Heart left ventricle (tissue), 16 donors: ENCODE measurements at regions of chr19 and their contacts with region 1.

Region 1: GRCh38 chr19:19053508-19054314 is 10.1 kb upstream of the SLC25A42 start:
- DNase-seq: peak; percentile 59 to 84 (median 70)
- ATAC-seq: peak; percentile 35 to 82 (median 62)
- H3K4me3 ChIP-seq: no peak overlapping the region
- H3K27ac ChIP-seq: no peak overlapping the region
- H3K4me1 ChIP-seq: peaks cover 0 to 6% (median 0%) of the 10 kb centered on the region in 12 donors
- H3K27me3 ChIP-seq: no peaks in the 10 kb centered on the region
- CTCF ChIP-seq: peak; percentile 54 to 77 (median 74)
- POLR2A ChIP-seq: no peak

Region 2: DNA sequence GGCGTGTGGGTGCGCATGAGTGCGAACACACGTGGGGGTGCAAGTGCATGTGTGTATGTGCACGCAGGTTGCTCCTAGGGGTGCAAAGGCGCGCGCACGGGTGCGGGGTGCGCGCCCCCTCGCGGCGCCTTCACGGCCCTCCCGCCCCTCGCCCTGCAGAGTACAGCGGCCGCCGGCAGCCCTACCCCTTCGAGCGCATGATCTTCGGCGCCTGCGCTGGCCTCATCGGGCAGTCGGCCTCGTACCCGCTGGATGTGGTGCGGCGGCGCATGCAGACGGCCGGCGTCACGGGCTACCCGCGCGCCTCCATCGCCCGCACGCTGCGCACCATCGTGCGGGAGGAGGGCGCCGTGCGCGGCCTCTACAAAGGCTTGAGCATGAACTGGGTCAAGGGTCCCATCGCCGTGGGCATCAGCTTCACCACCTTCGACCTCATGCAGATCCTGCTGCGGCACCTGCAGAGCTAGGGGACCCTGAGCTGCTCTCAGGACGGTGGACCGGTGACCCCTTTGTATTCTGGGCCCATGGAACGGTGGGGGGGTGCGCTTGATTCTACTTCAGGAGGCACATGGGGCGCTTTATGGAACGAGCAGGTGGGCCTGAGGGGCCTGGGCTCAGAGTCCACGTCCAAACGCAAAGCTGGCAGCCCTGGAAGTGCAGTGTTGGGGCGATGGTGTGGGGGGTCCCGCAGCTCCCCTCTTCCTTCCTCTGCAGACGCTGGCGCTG is 56.9 kb after region 1 on chr19:
- intact Hi-C with region 1: loop called in 2 of 10 experiments (anchors 2 to 5 kb)
- DNase-seq: no peak
- ATAC-seq: peak in 3 of 4 donors; percentile 25 to 31 (median 26)
- H3K4me3 ChIP-seq: peak overlapping the region in 1 of 12 donors; percentile 17
- H3K27ac ChIP-seq: no peak overlapping the region
- H3K4me1 ChIP-seq: peaks cover 0 to 13% (median 5%) of the 10 kb centered on the region in 12 donors
- H3K27me3 ChIP-seq: no peaks in the 10 kb centered on the region
- CTCF ChIP-seq: peak; percentile 15 to 57 (median 28)
- POLR2A ChIP-seq: no peak

Region 3: GRCh38 chr19:19179548-19180441 is 126.1 kb after region 1 on chr19:
- intact Hi-C with region 1: loop called in 1 of 10 experiments (anchors 5 kb)
- DNase-seq: no peak
- ATAC-seq: no peak
- H3K4me3 ChIP-seq: no peak overlapping the region
- H3K27ac ChIP-seq: no peak overlapping the region
- H3K4me1 ChIP-seq: no peaks in the 10 kb centered on the region
- H3K27me3 ChIP-seq: no peaks in the 10 kb centered on the region
- CTCF ChIP-seq: no peak
- POLR2A ChIP-seq: no peak